ENCODE measurements at regions of chr2 and their contacts with region 1.

Region 1: DNA sequence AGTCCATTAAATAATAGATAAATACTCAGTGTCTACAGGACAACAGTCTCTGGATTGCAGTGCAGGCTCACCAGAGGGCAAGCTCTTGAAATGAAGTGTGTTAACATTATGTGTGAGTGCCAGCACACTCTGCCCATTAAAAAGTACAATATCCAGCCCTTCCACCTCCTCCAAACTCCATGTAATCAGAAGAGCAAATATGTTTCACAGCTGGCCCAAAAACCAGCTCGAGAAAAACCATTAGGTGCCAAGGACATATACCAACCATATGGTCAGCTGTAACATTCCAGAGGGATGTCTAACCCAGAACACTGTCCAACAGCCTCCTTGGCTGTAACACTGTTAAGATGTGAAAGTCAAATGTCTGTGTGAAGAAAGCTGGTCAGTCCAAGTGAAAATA is 112.2 kb downstream of the ZNF385B start:
- DNase-seq: no peak
- ATAC-seq: no peak
- H3K4me3 ChIP-seq: no peak overlapping the region
- H3K27ac ChIP-seq: no peak overlapping the region
- H3K4me1 ChIP-seq: no peaks in the 10 kb centered on the region
- H3K27me3 ChIP-seq: no peaks in the 10 kb centered on the region
- CTCF ChIP-seq: no peak

Region 2: DNA sequence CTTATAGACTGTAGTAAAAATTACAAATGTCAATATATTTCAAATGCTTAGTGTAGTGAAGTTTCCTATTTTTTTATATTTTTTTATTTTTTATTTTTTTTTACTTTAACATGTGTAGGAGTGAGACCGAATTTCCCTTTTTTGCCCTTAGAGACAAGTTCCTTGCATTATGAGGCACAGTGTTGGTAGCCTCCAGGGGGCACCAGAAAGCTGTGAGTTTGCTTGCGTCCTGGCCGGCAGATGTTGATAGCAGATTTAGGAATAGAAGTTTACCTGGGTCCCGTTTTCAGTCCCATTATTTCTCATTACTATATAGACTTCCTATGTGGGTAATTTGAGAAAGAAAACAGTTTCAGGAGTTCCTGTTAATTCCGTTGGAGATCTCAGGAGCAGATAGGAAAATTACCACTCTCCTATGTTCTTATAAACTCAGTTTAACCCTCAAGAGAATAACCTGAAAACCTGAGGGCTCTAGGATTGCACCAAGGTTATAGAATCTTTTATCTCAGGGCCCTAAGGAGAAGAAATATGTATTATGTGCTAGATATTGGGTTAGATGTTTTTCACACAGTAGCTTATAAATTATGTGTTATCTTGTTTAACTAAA is 327.1 kb before region 1 on chr2:
- intact Hi-C with region 1: loop called (anchors 5 to 10 kb)
- DNase-seq: peak; percentile 42 to 77 (median 66)
- ATAC-seq: peak; percentile 75 to 93 (median 92)
- H3K4me3 ChIP-seq: no peak overlapping the region
- H3K27ac ChIP-seq: no peak overlapping the region
- H3K4me1 ChIP-seq: no peaks in the 10 kb centered on the region
- H3K27me3 ChIP-seq: no peaks in the 10 kb centered on the region
- CTCF ChIP-seq: peak; percentile 38 to 69 (median 67)

Region 3: DNA sequence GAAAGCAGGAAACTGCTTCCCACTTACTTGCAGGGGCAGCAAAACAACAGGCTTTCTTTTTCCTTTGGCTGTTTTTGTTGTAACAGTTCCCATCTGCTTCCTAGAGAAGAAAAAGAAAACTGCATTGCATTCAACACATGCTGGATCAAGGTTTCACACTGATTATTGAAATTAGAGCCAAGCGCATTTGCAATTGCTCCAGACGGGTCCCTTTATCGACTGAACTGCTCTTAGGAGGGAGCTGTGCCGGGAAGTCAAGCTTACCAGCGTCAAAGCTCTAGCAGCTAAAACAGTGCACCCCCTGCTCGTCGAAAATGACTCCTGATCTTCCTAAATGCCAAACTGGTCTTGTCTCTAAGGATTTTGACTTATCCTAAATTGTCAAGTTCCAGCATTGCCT is 320.6 kb before region 1 on chr2:
- intact Hi-C with region 1: loop called (anchors 5 to 10 kb)
- DNase-seq: no peak
- ATAC-seq: no peak
- H3K4me3 ChIP-seq: no peak overlapping the region
- H3K27ac ChIP-seq: no peak overlapping the region
- H3K4me1 ChIP-seq: no peaks in the 10 kb centered on the region
- H3K27me3 ChIP-seq: no peaks in the 10 kb centered on the region
- CTCF ChIP-seq: no peak